GM10248 (cell line): ENCODE measurements at regions of chr10 and their contacts with region 1.

Region 1: GRCh38 chr10:6050801-6051445 is 11.2 kb downstream of the IL2RA start:
- DNase-seq: peak; percentile 82
- CTCF ChIP-seq: peak; percentile 30

Region 2: DNA sequence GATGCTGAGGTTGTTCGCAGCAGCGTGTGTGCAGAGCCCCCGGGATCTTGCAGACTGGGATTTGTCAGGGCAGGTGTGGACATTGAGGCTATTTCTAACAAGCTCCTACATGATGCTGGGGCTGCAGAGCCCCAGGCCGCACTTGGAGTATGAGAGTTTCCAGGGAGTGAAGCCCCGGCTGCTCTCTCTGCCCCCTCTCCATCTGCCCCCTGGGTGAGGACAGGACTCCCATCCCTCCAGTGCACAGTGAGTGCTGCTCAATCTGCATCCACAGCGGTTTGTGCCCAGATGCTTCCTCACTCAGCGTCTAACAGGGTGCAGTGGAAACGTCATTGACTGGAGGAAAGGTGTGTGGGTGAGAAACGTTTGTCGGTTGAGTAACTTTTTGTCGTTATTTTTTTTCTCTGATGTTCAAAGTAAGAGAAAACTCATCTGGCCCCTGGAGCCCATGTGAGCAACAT is 14.0 kb before region 1 on chr10:
- CTCF ChIA-PET with region 1: interaction called, 24 read pairs
- POLR2A ChIA-PET with region 1: no interaction called
- DNase-seq: no peak
- CTCF ChIP-seq: no peak

Region 3: DNA sequence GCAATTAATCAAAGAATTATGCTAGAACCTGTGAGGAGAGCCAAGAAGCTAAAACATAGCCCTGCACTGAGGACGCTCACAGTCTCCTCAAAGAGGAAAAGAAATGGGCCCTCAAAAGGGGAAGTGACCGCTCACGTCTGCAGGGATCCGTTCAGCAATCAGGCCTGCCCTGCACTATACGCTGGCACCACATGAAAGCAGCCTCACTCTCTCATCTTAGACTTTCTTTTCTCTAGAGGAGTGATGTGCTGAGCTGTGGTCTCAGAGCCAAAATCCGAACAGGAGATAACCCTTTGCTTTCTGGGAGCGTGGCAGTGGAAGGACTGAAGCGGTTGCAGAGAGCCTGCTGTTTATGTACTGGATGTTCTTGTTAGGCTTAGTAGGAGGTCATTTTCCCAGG is 17.5 kb after region 1 on chr10:
- CTCF ChIA-PET with region 1: interaction called, 28 read pairs
- POLR2A ChIA-PET with region 1: interaction called, 3 read pairs
- DNase-seq: peak; percentile 60
- CTCF ChIP-seq: no peak